Breast epithelium (tissue), 4 donors: ENCODE measurements at regions of chr10 and their contacts with region 1.

Region 1: GRCh38 chr10:85679710-85680109 is 686.9 kb downstream of the GRID1 start:
- DNase-seq: no peak
- H3K4me3 ChIP-seq: no peak overlapping the region
- H3K27ac ChIP-seq: no peak overlapping the region
- H3K4me1 ChIP-seq: no peaks in the 10 kb centered on the region
- H3K27me3 ChIP-seq: no peaks in the 10 kb centered on the region
- CTCF ChIP-seq: no peak
- POLR2A ChIP-seq: no peak

Region 2: DNA sequence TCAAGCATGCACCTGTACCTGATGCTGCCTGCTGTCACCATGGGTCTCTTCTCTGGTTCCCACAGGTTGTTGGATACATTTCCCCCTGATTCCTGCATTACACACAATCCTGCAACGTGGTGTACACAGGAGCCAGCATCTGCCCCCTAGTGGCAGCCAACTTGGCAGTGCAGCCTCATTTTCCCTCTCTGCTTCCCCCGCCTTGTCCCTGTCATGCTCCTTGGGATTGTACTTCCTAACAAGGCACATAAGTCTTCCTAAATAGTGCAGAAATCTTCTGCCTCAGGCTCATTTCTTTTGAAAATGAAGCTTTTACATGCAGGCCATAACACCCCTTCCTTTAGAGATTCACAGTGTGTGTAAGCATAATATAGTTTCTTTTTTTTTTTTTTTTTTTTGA is 963.8 kb before region 1 on chr10:
- intact Hi-C with region 1: loop called (anchors 5 kb)
- DNase-seq: no peak
- H3K4me3 ChIP-seq: no peak overlapping the region
- H3K27ac ChIP-seq: no peak overlapping the region
- H3K4me1 ChIP-seq: no peaks in the 10 kb centered on the region
- H3K27me3 ChIP-seq: no peaks in the 10 kb centered on the region
- CTCF ChIP-seq: no peak
- POLR2A ChIP-seq: no peak

Region 3: DNA sequence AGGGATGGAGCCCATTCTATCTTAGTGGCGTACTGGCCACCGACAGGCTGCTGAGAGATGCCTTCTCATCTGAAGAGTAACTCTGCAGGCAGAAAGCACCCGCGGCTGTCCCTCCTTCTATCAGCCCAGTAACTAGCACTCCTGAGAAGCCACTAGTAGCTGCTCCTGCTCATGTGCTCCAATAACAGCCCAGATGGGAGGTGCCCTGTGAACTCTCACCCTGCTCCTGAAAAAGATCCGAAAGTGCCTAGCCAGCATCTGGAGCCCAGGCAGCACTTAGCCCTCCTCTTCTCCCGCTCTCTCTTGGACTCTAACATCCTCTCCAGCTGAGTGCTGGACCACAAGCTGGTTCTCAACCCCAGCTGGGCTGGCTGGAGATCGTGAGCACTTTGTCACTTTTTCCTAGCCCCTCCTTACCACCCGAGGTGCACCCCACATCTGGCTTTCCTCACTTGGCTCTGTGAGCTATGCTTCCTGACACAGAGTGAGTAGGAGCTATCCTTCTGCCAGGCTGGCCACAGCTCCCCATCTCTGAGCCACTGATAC is 447.6 kb after region 1 on chr10:
- intact Hi-C with region 1: no loop called
- DNase-seq: no peak
- H3K4me3 ChIP-seq: no peak overlapping the region
- H3K27ac ChIP-seq: no peak overlapping the region
- H3K4me1 ChIP-seq: no peaks in the 10 kb centered on the region
- H3K27me3 ChIP-seq: no peaks in the 10 kb centered on the region
- CTCF ChIP-seq: no peak
- POLR2A ChIP-seq: no peak